ENCODE measurements at regions of chr18 and their contacts with region 1.

Region 1: GRCh38 chr18:10006311-10006893 is 92.6 kb downstream of the VAPA start:
- DNase-seq: no peak
- H3K4me3 ChIP-seq: no peak overlapping the region
- H3K27ac ChIP-seq: peak overlapping the region in 1 of 2 donors; percentile 17
- H3K4me1 ChIP-seq: peaks cover 0 to 26% (median 18%) of the 10 kb centered on the region in 4 donors
- H3K27me3 ChIP-seq: no peaks in the 10 kb centered on the region
- CTCF ChIP-seq: peak; percentile 23 to 38

Region 2: DNA sequence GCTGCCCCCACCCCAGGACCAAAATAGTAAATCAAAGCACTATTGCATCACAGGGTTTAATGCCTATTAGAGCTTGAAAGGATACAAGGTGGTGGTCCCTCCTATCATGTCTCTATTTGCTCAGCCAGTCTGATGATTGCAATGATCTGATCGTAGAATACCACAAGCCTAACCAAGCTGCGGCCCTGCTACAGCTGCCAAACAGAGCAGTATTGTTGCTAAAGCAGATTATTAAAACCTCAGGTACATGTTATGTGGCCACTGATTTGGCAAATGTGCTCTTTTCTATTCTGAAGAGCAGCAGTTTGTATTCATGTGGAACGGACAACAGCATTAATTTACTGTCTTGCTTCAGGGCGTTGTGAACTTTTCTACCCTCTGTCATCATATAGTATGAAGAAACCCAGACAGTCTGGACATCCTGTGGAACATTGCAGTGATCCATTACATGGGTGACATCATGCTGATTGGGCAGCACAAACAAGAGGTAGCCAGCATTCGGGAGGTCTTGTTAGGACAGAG is 100.9 kb before region 1 on chr18:
- intact Hi-C with region 1: no loop called
- DNase-seq: no peak
- H3K4me3 ChIP-seq: no peak overlapping the region
- H3K27ac ChIP-seq: no peak overlapping the region
- H3K4me1 ChIP-seq: no peaks in the 10 kb centered on the region
- H3K27me3 ChIP-seq: no peaks in the 10 kb centered on the region
- CTCF ChIP-seq: no peak

Region 3: DNA sequence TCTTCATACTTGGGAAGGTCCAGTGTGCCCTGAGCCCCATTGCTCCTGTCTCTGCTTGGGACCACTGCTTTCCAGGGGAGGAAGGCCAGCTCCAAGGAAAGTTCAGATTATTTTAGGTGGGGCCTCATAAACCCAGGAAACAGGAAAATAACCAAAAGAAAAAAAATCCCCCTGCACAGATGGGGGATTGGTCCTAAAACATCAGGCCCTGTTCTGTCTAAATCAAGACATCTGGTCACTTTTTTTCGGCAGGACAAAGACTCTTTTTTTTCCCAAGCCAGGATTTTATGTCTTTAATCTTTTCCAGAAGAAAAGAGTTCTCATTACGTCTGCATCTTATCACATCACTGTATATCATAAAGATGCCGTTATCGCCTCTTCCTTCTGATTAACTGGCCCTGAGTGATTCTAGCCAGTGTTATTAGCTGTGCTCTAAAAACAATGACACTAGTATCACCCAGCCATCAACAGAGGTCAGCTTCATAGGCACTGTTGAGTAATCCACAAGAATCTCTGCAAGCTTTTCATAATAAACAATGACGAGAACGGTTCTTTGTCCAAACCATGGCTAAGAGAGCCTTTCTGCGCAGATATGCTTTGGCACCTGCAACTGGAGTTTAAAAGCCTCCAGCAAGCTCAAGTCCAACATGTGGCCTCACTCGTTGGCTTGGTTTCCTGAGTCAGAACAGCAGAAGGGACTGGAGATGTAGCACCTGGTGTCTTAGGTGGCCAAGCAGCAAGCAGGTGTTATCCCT is 45.7 kb after region 1 on chr18:
- intact Hi-C with region 1: no loop called
- DNase-seq: peak; percentile 83 to 84
- H3K4me3 ChIP-seq: no peak overlapping the region
- H3K27ac ChIP-seq: peak overlapping the region in 1 of 2 donors; percentile 26
- H3K4me1 ChIP-seq: peaks cover 0 to 8% (median 2%) of the 10 kb centered on the region in 4 donors
- H3K27me3 ChIP-seq: no peaks in the 10 kb centered on the region
- CTCF ChIP-seq: no peak

Region 4: GRCh38 chr18:10525371-10526210 is 519.2 kb after region 1 on chr18 and contains the start of gene NAPG:
- intact Hi-C with region 1: loop called (anchors 10 kb)
- DNase-seq: peak; percentile 84 to 95
- H3K4me3 ChIP-seq: peak within 1 kb of the TSS; percentile 70 to 94
- H3K27ac ChIP-seq: peak within 1 kb of the TSS; percentile 89 to 95
- H3K4me1 ChIP-seq: peaks cover 0 to 40% (median 19%) of the 10 kb centered on the region in 4 donors
- H3K27me3 ChIP-seq: no peaks in the 10 kb centered on the region
- CTCF ChIP-seq: peak in 1 of 2 experiments; percentile 14